GM23248 (cell line): ENCODE measurements at regions of chr16 and their contacts with region 1.

Region 1: GRCh38 chr16:65117811-65118448 is 3.9 kb downstream of the CDH11 start:
- DNase-seq: peak; percentile 89
- H3K4me3 ChIP-seq: peak overlapping the region; percentile 98
- H3K27ac ChIP-seq: peak overlapping the region; percentile 76
- H3K4me1 ChIP-seq: peaks cover 44% of the 10 kb centered on the region
- H3K27me3 ChIP-seq: no peaks in the 10 kb centered on the region

Region 2: DNA sequence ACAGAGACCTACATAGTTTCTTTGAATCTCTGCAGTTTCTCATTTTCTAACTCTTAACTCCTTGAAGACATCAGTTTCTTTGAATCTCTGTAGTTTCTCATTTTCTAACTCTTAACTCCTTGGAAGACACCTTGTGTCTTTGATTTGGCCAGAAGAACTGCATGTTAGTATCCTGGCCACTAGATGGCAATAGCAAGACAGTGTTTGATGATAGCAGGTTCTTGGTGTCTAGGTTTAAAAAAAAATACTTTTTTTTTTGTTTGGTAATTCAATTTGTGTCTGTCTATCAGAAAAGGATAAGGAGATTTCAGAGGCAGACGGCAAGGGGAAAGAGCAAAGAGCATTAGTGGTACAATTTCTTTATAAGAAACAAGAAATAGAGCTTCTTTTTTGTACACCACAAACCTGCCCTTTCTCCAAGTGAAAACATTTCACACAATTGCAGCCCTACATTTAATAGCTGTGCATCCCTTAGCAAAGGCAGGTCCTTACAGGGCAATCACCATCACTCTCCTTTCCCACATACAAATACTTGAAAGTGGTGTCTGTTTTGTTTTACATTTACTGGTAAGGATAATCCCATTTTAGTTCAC is 1756.8 kb before region 1 on chr16:
- in situ Hi-C with region 1: loop called (anchors 25 kb)
- DNase-seq: peak; percentile 64
- H3K4me3 ChIP-seq: no peak overlapping the region
- H3K27ac ChIP-seq: no peak overlapping the region
- H3K4me1 ChIP-seq: no peaks in the 10 kb centered on the region
- H3K27me3 ChIP-seq: no peaks in the 10 kb centered on the region; the same call in 1 of the 2 replicates